ENCODE measurements at regions of chr19 and their contacts with region 1.

Region 1: GRCh38 chr19:28878862-28879566 is 333.9 kb downstream of the UQCRFS1 start:
- DNase-seq: peak; percentile 83
- H3K4me3 ChIP-seq: no peak overlapping the region
- H3K27ac ChIP-seq: no peak overlapping the region
- H3K4me1 ChIP-seq: peaks cover 10% of the 10 kb centered on the region
- H3K27me3 ChIP-seq: no peaks in the 10 kb centered on the region

Region 2: DNA sequence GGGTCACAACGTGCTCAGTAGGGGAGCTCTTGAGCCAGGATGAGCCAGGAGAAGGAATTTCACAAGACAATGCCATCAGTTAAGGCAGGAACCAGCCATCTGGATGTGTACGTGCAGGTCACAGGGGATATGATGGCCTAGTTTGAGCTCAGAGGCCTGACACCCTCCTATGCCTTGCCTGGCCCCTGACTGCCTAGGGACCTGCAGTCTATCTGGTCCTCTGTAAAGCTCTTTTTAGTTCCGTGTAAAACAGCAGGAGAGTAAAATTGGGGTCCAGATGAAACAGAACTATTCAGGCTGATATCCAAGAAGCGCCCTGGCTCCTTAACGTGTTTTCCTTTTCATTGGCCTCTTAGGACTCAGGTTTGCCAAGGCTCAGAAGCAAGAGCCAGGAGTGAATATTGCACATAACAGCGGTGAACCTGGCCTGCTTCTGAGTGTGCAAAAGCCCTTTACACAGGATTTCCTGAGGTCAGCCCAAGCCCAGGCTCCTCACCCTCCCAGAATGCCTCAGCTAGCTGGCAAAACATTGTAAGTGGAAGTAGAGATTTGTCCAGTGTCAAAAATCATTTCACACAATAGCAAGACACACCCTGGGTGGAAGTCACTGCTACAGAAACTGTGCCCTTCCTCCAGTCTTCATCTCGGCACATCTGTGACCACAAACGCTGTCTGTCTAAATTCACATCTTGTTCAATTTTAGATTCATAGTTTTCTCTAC is 443.3 kb before region 1 on chr19:
- in situ Hi-C with region 1: no loop called
- DNase-seq: no peak
- H3K4me3 ChIP-seq: no peak overlapping the region
- H3K27ac ChIP-seq: no peak overlapping the region
- H3K4me1 ChIP-seq: peaks cover 17% of the 10 kb centered on the region
- H3K27me3 ChIP-seq: peaks cover 25% of the 10 kb centered on the region

Region 3: DNA sequence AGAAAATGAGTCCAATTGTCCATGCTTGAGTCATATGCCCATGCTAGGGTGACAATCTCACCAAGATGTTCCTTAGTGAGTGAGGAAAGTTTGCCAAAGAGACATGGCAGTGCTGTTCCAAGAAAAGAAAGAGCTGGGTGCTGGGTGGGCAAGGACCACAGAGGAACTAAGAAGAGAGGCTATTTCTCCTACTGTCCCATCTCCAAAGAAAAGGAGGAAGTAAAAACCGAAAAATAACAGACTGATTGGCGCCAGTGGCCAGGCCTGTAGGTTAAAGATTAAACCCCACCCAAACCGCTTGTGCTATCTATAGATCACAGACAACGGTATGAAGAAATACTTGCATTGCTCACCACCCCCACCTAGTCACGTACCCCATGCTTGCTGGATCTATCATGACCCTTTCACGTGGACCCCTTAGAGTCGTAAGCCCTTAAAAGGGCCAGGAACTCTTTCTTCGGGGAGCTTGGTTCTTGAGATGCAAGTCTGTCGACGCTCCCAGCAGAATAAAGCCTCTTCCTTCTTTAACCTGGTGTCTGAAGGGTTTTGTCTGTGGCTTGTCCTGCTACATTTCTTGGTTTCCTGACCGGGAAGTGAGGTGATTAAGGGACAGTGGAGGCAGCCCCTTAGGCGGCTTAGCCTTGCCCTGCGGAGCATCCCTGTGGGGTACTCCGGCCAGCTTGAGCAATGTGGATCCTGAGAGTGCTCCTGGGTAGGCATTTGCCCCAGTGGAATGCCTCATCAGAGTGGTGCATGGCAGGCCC is 272.6 kb before region 1 on chr19:
- in situ Hi-C with region 1: no loop called
- DNase-seq: no peak
- H3K4me3 ChIP-seq: no peak overlapping the region
- H3K27ac ChIP-seq: no peak overlapping the region
- H3K4me1 ChIP-seq: no peaks in the 10 kb centered on the region
- H3K27me3 ChIP-seq: no peaks in the 10 kb centered on the region

Region 4: DNA sequence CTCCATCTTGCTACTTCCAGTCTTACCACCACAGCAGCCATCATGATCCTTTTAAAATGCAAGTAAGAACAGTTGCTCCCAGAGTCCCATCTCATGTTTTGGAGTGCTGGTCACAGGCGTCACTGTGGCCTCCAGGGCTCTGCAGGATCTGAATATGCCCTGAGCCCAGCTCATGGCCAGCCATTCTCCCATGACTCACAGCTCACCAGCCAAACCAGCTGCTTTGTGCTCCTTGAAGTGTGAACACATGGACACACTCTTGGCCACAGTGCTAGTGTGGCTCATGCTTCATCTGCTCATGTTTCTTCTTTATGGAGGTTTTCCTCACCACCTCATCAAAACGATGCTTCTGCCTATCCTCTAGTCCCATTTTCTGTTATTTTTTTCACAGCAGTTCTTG is 132.5 kb before region 1 on chr19:
- in situ Hi-C with region 1: loop called (anchors 10 kb)
- DNase-seq: peak; percentile 14
- H3K4me3 ChIP-seq: no peak overlapping the region
- H3K27ac ChIP-seq: no peak overlapping the region
- H3K4me1 ChIP-seq: no peaks in the 10 kb centered on the region
- H3K27me3 ChIP-seq: no peaks in the 10 kb centered on the region